Activated naive CD4-positive, alpha-beta T cell treated with anti-CD3 and anti-CD28 coated beads for 36 hours (primary cell): ENCODE measurements at regions of chr2 and their contacts with region 1.

Region 1: DNA sequence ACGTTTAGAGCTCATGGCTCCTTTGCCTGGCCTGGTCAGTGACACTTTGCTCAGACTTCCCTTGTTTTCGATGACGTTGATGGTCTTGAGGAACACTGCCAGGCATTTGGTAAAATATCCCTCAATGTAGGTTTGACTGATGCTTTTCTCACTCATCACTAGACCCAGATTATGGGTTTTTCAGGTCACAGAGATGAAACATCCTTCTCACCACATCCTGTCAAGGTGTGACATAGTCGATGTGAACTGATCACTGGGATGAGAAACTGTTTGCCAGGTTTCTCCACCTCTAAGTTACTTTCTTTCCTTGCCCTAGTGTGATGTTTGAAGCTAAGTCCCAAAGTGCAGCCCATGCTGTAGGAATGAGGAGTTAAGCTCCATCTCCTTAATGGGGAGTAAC is 81.5 kb downstream of the AFF3 start:
- DNase-seq: peak; percentile 60
- H3K4me3 Mint-ChIP-seq: no peak overlapping the region
- H3K27ac Mint-ChIP-seq: peak overlapping the region; percentile 81
- H3K4me1 Mint-ChIP-seq: peaks cover 45% of the 10 kb centered on the region
- H3K27me3 Mint-ChIP-seq: no peaks in the 10 kb centered on the region

Region 2: GRCh38 chr2:99911736-99912135 is 149.1 kb before region 1 on chr2:
- CTCF ChIA-PET with region 1: no interaction called
- intact Hi-C with region 1: no loop called
- DNase-seq: no peak
- H3K4me3 Mint-ChIP-seq: no peak overlapping the region
- H3K27ac Mint-ChIP-seq: no peak overlapping the region
- H3K4me1 Mint-ChIP-seq: no peaks in the 10 kb centered on the region
- H3K27me3 Mint-ChIP-seq: no peaks in the 10 kb centered on the region

Region 3: DNA sequence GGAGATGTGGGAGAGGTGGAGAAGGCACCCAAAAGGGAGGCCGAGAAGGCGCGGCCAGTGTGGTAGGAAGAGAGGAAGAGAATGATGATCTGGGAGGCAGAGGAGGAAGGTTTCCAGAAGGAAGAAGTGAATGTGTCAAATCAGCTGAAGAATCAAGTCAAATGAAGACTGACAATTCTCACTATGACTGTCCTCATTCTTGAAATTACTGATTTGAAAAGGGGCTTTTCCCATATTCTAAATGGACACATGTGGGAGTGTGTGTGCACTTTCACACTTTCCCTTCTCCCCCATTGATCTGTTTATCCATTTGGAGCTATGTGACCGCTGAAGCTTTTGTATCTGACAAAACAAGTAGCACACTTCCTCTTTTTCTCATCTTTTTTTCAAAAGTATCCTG is 75.4 kb after region 1 on chr2:
- CTCF ChIA-PET with region 1: no interaction called
- intact Hi-C with region 1: loop called (anchors 1 kb)
- DNase-seq: no peak
- H3K4me3 Mint-ChIP-seq: no peak overlapping the region
- H3K27ac Mint-ChIP-seq: no peak overlapping the region
- H3K4me1 Mint-ChIP-seq: peaks cover 40% of the 10 kb centered on the region
- H3K27me3 Mint-ChIP-seq: peaks cover 2% of the 10 kb centered on the region

Region 4: DNA sequence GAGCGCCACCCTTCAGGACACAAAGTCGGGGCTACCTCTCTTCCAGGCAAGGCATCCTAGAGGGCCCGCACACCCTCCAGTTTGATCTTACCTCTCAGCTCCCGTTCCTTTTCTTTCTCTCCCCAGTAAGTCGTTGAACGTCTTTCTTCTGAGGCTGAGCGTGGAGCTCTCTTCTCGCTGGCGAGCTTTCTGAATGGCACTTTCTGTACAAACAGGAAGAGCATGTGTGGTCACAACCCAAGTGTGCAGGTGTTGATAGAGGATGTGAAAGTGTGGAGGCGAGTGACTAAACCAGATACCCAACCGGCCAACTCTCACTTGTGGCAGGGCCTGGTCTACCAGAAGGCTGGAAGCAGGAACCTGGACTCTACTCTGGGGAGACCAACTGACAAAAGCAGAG is 81.5 kb after region 1 on chr2 and contains the start of gene AFF3:
- CTCF ChIA-PET with region 1: no interaction called
- intact Hi-C with region 1: loop called (anchors 1 kb)
- DNase-seq: peak; percentile 79
- H3K4me3 Mint-ChIP-seq: peak within 1 kb of the TSS; percentile 71
- H3K27ac Mint-ChIP-seq: peak within 1 kb of the TSS; percentile 73
- H3K4me1 Mint-ChIP-seq: peaks cover 54% of the 10 kb centered on the region
- H3K27me3 Mint-ChIP-seq: peaks cover 2% of the 10 kb centered on the region
- total RNA-seq, gene AFF3: 1.5 to 2.1 TPM

Region 5: GRCh38 chr2:100580367-100581276 is 519.7 kb after region 1 on chr2:
- CTCF ChIA-PET with region 1: no interaction called
- intact Hi-C with region 1: loop called (anchors 10 kb)
- DNase-seq: peak; percentile 62
- H3K4me3 Mint-ChIP-seq: peak overlapping the region; percentile 56
- H3K27ac Mint-ChIP-seq: peak overlapping the region; percentile 93
- H3K4me1 Mint-ChIP-seq: peaks cover 40% of the 10 kb centered on the region
- H3K27me3 Mint-ChIP-seq: no peaks in the 10 kb centered on the region